ENCODE measurements at regions of chr14 and their contacts with region 1.

Region 1: GRCh38 chr14:77320238-77320935 is at the start of gene POMT2:
- DNase-seq: peak; percentile 91 to 98 (median 96)

Region 2: DNA sequence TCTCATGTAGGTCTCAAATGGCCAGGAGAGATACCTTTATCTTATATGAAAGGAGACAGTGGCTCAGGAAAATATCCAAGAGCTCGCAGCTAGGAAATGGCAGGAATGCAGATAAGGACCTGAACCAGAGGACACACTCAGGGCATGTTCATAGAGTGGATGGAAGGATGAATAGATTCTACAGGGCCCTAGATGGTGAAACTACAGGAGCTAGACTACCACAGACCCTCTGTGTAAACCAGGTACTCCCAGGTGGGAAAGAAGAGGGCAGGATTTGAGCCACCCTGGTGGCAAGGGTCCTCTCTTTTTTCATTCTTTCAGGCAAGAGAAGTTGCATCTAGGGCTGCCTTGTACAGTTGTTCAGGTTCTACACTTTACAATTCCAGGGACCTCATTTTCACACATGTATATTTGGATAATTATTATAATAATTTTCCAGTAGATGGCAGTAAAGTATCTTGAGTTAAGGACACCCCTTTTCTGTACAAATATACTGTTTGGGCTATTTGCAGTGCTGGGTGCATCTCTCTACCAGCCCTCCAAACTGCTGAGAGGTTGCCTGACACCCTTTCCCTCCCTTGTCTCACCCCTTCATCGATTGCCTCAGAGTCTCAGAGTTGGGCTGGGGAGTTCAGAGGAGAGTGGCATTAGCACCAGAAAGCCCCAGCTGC is 168.3 kb before region 1 on chr14:
- intact Hi-C with region 1: loop called (anchors 5 kb)
- DNase-seq: peak in 3 of 42 donors; percentile 15 to 34 (median 20)

Region 3: DNA sequence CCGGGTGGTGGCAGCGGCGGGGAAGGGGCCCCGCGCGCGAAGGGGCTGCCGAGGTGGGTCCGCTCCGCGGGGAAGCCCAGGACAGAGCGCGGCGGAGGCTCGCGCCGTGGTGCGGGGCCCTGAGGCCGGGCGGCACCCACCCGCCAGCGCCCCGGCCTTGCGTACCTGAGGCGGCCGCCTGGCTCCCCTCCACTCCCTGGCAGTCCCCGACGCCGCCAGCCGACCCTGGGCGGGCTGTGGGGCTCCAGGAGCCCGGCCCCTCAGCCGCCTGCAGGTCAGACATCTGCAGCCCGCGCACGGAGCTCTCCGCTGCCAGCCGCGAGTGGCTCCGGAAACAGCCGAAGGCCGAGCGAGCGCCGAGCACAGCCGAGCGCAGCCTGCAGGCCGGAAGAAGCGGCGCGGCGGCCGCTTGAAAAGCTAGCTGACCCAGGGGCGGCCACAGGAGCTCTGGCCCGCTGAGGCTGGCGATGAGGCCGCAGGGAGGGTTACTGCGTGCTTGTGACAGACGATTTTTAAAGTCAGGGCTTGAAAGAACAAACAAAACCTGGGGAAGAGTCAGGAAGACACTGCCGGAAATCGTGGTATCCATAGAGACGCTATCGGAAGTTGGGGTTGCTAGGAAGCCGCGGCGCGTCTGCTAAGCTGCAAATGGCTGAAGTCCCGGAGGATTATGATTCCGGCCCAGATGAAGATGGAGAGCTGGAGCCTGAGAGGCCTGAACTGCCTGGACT is 56.5 kb after region 1 on chr14 and contains the starts of genes SAMD15 and TMED8:
- intact Hi-C with region 1: loop called (anchors 2 kb)
- DNase-seq: peak; percentile 75 to 93 (median 86)

Region 4: DNA sequence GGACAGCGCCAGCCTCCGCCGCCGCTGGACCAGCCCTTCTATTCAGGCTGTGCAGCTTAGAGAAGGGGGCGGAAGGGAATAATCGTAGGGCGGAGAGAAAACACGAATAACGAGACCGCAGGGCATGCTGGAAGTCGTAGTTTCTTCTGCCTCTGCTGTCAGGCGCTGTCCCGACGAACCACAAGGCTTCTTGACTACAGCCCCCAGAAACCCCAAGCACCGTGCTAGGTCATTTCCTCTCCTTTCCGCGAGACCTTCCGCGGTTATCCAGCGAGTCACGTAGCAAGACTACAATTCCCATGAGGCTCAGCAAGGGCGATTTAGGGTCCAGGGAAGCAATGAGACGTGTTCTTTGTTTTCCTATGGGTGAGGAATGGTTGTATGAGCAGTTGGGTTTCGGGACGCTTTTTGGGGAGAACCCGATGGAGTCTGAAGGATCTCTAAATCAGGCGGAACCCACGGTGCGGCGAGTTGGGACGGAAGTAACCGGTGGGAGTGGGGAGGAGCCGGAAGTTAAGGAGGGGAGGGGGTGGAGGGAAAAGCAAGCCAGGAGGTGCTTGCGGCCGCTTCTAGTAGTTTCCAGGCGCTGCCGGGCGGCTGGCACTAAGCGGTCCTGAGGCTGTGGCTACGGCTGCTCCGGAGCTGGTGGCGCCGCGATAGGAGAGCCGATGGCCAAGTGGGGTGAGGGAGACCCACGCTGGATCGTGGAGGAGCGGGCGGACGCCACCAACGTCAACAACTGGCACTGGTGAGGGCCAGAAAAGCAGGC is 137.3 kb after region 1 on chr14 and contains the starts of genes AHSA1 and VIPAS39:
- intact Hi-C with region 1: loop called (anchors 2 kb)
- DNase-seq: peak; percentile 92 to 100 (median 98)

Region 5: GRCh38 chr14:77554207-77554606 is 233.8 kb after region 1 on chr14:
- intact Hi-C with region 1: loop called (anchors 10 kb)
- DNase-seq: peak in 1 of 42 donors; percentile 15

Measured in head of caudate nucleus (tissue), 42 donors.